Ascending aorta (tissue), 2 donors: ENCODE measurements at regions of chr1 and their contacts with region 1.

Region 1: DNA sequence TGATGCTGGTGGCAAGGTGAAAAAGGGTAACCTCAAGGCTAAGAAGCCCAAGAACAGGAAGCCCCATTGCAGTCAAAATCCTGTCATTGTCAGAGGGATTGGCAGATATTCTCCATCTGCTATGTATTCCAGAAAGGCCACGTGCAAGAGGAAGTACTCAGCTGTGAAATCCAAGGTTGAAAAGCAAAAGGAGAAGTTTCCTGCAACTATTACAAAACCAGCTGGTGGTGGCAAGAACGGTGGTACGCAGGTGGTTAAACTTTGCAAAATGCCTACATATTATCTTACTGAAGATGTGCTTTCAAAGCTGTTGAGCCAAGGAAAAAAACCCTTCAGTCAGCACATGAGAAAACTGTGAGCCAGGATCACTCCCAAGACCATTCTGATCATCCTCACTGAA is 13.7 kb upstream of the VPS45 start:
- DNase-seq: no peak
- H3K4me3 ChIP-seq: no peak overlapping the region
- H3K27ac ChIP-seq: no peak overlapping the region
- H3K4me1 ChIP-seq: peaks cover 0 to 2% of the 10 kb centered on the region in 2 donors
- H3K27me3 ChIP-seq: no peaks in the 10 kb centered on the region
- CTCF ChIP-seq: no peak

Region 2: GRCh38 chr1:149962123-149962548 is 91.8 kb before region 1 on chr1:
- intact Hi-C with region 1: loop called (anchors 1 kb)
- DNase-seq: peak in 1 of 2 donors; percentile 79
- H3K4me3 ChIP-seq: no peak overlapping the region
- H3K27ac ChIP-seq: peak overlapping the region; percentile 51 to 65
- H3K4me1 ChIP-seq: peaks cover 0 to 13% of the 10 kb centered on the region in 2 donors
- H3K27me3 ChIP-seq: no peaks in the 10 kb centered on the region
- CTCF ChIP-seq: peak; percentile 70 to 80 (median 75)

Region 3: GRCh38 chr1:150010393-150011115 is 43.4 kb before region 1 on chr1 and contains the start of gene OTUD7B:
- intact Hi-C with region 1: loop called (anchors 5 kb)
- DNase-seq: peak; percentile 28 to 92
- H3K4me3 ChIP-seq: peak within 1 kb of the TSS; percentile 78 to 92
- H3K27ac ChIP-seq: peak within 1 kb of the TSS; percentile 97 to 99
- H3K4me1 ChIP-seq: peaks cover 12 to 15% of the 10 kb centered on the region in 2 donors
- H3K27me3 ChIP-seq: no peaks in the 10 kb centered on the region
- CTCF ChIP-seq: no peak
- total RNA-seq, gene OTUD7B: 7.1 TPM